Activated CD4-positive, alpha-beta T cell treated with anti-CD3 and anti-CD28 coated beads, Interleukin-2, amount 10 ng/mL, durations not matched to agents 24 days and 14 days (primary cell): ENCODE measurements at regions of chr10 and their contacts with region 1.

Region 1: DNA sequence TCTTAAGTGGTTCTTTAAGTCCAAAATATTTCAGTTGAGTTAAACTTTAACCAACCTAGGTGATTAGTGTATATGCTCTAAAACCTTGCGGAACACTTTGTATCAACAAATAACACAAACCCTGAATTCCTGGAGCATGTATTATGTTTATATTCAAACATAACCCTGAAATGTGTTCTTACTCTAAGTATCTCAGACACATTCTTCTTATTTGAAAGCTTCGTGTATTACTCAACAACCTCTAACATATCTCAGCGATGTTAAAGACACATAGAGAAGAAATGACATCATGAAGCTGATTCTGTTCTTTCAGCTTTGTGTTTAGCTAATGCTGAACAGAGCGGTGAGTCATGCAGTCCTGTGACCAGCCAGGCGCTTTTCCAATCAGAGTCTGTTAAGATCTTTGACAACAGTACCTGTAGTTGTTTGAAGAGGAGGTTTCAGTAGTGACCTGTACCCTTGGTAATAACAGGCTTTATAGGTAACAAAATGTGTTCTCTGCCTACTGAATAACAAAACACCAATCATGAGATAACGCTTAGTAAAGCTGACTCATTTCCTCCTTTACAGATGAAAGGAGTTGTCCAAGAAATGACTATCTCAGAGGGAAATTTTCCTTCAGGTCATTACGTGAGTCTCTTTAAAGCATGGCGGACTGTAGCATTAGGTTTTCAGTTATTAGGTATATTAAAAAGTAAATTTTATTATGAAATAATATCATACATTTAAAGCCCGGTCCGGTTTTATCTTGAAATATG is 67.3 kb upstream of the KLF6 start:
- DNase-seq: peak; percentile 89
- H3K4me3 Mint-ChIP-seq: peak overlapping the region; percentile 70
- H3K27ac Mint-ChIP-seq: peak overlapping the region; percentile 87
- H3K4me1 Mint-ChIP-seq: peaks cover 38% of the 10 kb centered on the region
- H3K27me3 Mint-ChIP-seq: no peaks in the 10 kb centered on the region

Region 2: GRCh38 chr10:3776796-3777571 is 75.3 kb before region 1 on chr10:
- intact Hi-C with region 1: loop called (anchors 1 kb)
- DNase-seq: peak; percentile 89
- H3K4me3 Mint-ChIP-seq: peak overlapping the region; percentile 76
- H3K27ac Mint-ChIP-seq: peak overlapping the region; percentile 86
- H3K4me1 Mint-ChIP-seq: peaks cover 61% of the 10 kb centered on the region
- H3K27me3 Mint-ChIP-seq: no peaks in the 10 kb centered on the region

Region 3: GRCh38 chr10:3811291-3811870 is 40.9 kb before region 1 on chr10:
- intact Hi-C with region 1: loop called (anchors 1 kb)
- DNase-seq: peak; percentile 90
- H3K4me3 Mint-ChIP-seq: peak overlapping the region; percentile 68
- H3K27ac Mint-ChIP-seq: no peak overlapping the region
- H3K4me1 Mint-ChIP-seq: peaks cover 71% of the 10 kb centered on the region
- H3K27me3 Mint-ChIP-seq: no peaks in the 10 kb centered on the region

Region 4: GRCh38 chr10:3835770-3836169 is 16.6 kb before region 1 on chr10:
- intact Hi-C with region 1: loop called (anchors 1 kb)
- DNase-seq: no peak
- H3K4me3 Mint-ChIP-seq: no peak overlapping the region
- H3K27ac Mint-ChIP-seq: peak overlapping the region; percentile 85
- H3K4me1 Mint-ChIP-seq: peaks cover 45% of the 10 kb centered on the region
- H3K27me3 Mint-ChIP-seq: no peaks in the 10 kb centered on the region

Region 5: DNA sequence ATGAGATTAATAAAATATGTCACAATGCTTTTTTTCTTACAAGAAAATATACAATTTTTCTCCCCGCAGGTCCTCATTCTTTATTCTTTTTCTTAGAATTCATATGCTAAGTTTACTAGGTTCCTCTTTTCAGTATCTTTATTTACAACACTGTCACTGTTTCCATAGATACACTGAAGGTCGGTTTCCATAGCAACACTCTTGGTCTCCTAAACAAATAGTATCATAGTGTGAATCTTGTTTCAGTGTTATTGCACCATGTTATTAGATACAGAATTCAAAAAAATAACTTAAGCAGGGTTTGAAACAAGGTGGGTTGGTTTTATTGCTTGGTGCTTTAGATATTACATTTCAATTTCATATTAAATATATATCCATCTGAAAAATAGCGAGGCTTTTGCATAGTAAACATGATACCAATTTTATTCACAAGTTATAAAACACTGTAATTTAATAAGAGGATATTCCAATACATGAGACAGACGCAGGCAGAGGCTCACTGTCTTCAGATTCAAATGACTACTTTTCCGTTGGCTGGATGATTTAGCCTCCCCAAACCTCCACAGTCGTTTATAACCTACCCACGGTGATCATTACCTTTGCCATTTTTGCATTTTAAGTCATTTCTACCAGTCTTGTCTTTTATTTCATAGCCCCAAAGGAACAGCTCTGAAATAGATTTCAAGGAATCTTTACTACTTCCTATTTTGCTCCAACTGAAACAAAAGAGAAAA is 21.6 kb after region 1 on chr10:
- intact Hi-C with region 1: loop called (anchors 1 kb)
- DNase-seq: peak; percentile 81
- H3K4me3 Mint-ChIP-seq: peak overlapping the region; percentile 14
- H3K27ac Mint-ChIP-seq: peak overlapping the region; percentile 88
- H3K4me1 Mint-ChIP-seq: peaks cover 52% of the 10 kb centered on the region
- H3K27me3 Mint-ChIP-seq: no peaks in the 10 kb centered on the region